Ascending aorta (tissue), 2 donors: ENCODE measurements at regions of chr17 and their contacts with region 1.

Region 1: DNA sequence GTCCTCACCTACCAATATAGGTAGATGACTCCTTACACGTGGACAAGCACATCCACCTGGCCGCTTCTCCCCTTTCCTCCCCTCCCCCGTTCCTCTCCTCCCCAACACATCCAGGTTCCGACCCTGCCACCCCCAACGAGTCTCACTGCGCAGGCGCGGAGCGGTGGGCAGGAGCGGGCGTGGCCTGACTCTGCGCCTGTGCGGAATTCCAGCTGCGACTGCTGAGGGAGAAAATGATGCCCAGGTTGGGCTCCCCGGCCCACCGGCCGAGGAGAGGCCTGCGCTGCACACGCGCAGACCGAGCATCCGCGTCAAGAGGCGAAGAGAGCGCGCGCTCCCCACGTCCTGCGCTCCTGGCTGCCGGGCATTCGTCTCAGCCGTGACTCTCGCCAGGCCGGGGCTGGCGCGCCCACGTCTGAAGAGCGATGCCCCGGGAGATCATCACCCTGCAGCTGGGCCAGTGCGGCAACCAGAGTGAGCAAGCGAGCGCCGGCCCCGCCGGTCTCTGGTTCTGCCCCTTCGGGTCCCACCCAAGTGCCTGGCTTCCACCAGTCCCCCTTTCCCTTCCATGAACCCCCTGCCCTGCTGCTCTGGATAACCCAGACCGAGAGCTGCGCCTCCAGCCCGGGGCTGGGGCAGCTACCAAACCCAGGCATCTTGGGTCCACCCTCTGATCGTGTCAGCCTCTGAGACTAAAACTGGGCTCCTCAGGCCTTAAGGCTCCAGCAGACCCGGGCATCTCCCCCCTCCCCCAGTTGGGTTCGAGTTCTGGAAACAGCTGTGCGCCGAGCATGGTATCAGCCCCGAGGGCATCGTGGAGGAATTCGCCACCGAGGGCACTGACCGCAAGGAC is at the start of gene TUBG2:
- DNase-seq: peak in 1 of 2 donors; percentile 91
- H3K4me3 ChIP-seq: peak within 1 kb of the TSS; percentile 49 to 85
- H3K27ac ChIP-seq: peak within 1 kb of the TSS; percentile 71 to 91
- H3K4me1 ChIP-seq: peaks cover 9 to 13% of the 10 kb centered on the region in 2 donors
- H3K27me3 ChIP-seq: no peaks in the 10 kb centered on the region
- CTCF ChIP-seq: no peak
- total RNA-seq, gene TUBG2: 73.1 TPM

Region 2: GRCh38 chr17:42609182-42609813 is 50.0 kb before region 1 on chr17 and contains the starts of genes RETREG3 and TUBG1:
- intact Hi-C with region 1: loop called (anchors 1 kb)
- DNase-seq: peak; percentile 95 to 99
- H3K4me3 ChIP-seq: peak within 1 kb of the TSS; percentile 76 to 79
- H3K27ac ChIP-seq: peak within 1 kb of the TSS; percentile 89 to 92
- H3K4me1 ChIP-seq: peaks cover 6 to 29% of the 10 kb centered on the region in 2 donors
- H3K27me3 ChIP-seq: no peaks in the 10 kb centered on the region
- CTCF ChIP-seq: peak; percentile 41 to 55 (median 42)
- total RNA-seq, gene RETREG3: 51.3 TPM
- total RNA-seq, gene TUBG1: 10.5 TPM